CD4-positive, alpha-beta T cell (primary cell): ENCODE measurements at regions of chr19 and their contacts with region 1.

Region 1: DNA sequence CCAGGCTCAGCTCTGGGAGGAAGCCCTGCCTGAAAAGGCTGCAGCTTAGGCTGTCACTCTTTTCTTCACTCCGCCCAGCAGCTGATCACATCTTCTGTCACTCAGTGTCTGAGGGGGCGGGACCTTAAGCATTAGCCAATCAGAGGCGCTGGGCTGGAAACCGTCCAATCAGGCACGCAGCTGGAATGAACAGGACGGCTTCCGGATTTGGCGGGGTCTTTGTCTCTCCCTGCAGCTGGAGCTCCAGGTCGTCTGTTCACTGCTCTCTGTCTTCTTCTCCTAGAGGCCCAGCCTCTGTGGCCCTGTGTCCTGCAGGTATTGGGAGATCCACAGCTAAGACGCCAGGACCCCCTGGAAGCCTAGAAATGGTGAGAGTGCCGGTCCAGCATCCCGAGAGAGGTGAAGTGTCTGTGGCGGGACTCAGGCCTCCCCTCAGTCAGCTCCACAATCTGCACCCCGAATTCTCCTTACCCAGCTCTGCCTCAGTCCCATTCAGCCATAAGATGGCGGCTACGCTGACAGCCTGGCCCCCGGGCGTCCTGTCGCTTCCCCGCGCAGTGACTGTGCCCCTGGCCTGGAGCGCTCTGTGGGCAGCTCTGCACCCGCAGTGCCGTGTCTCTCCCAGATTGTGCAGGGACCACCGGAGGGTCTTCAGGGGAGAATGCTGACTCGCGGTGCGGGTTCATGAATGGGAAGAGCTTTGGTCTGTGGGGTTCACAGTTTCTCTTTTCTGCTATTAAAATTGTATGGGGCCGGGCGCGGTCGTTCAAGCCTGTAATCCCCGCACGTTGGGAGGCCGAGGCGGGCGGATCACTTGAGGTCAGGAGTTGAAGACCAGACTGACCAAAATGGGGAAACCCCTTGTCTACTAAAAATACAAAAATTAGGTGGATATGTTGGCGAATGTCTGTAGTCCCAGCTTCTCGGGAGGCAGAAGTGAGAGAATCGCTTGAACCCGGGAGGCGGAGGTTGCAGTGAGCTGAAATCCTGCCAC is at the start of gene ZNF66:
- DNase-seq: peak; percentile 90 to 98 (median 93)
- ATAC-seq: peak; percentile 97
- H3K4me3 ChIP-seq: peak within 1 kb of the TSS; percentile 85
- H3K4me3 Mint-ChIP-seq: peak within 1 kb of the TSS; percentile 97
- H3K27ac ChIP-seq: peak within 1 kb of the TSS; percentile 70 to 74
- H3K27ac Mint-ChIP-seq: peak within 1 kb of the TSS; percentile 91
- H3K4me1 ChIP-seq: peaks cover 6% of the 10 kb centered on the region
- H3K4me1 Mint-ChIP-seq: peaks cover 31% of the 10 kb centered on the region
- H3K27me3 ChIP-seq: no peaks in the 10 kb centered on the region
- H3K27me3 Mint-ChIP-seq: no peaks in the 10 kb centered on the region
- CTCF ChIP-seq: no peak
- total RNA-seq, gene ZNF66: 6.4 to 7.4 TPM

Region 2: DNA sequence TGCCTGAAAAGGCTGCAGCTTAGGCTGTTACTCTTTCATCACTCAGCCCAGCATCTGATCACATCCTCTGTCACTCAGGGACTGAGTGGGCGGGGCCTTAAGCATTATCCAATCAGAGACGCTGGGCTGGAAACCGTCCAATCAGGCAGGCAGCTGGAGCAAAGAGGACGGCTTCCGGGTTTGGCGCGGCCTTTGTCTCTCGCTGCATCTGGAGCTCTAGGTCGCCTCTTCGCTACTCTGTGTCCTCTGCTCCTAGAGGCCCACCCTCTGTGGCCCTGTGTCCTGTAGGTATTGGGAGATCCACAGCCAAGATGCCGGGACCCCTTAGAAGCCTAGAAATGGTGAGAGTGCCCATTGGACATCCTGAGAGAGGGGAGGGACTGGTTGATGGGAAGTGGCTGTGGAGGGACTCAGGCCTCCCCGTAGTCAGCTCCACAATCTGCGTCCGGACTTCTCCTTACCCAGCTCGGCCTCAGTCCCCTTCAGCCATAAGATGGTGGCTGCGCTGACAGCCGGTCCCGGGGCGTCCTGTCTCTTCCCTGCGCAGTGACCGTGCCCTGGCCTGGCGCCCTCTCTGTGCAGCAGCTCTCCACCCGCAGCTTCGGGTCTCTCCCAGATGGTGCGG is 609.2 kb before region 1 on chr19 and contains the start of gene ZNF486:
- CTCF ChIA-PET with region 1: no interaction called
- POLR2A ChIA-PET with region 1: interaction called, 6 read pairs
- intact Hi-C with region 1: loop called in 1 of 2 experiments (anchors 10 kb)
- DNase-seq: peak; percentile 83 to 97 (median 88)
- ATAC-seq: peak; percentile 97
- H3K4me3 ChIP-seq: peak within 1 kb of the TSS; percentile 67
- H3K4me3 Mint-ChIP-seq: peak within 1 kb of the TSS; percentile 98
- H3K27ac ChIP-seq: no peak within 1 kb of the TSS
- H3K27ac Mint-ChIP-seq: peak within 1 kb of the TSS; percentile 87
- H3K4me1 ChIP-seq: peaks cover 13% of the 10 kb centered on the region
- H3K4me1 Mint-ChIP-seq: peaks cover 63% of the 10 kb centered on the region
- H3K27me3 ChIP-seq: no peaks in the 10 kb centered on the region
- H3K27me3 Mint-ChIP-seq: no peaks in the 10 kb centered on the region
- CTCF ChIP-seq: no peak
- total RNA-seq, gene ZNF486: 3.0 to 3.8 TPM

Region 3: DNA sequence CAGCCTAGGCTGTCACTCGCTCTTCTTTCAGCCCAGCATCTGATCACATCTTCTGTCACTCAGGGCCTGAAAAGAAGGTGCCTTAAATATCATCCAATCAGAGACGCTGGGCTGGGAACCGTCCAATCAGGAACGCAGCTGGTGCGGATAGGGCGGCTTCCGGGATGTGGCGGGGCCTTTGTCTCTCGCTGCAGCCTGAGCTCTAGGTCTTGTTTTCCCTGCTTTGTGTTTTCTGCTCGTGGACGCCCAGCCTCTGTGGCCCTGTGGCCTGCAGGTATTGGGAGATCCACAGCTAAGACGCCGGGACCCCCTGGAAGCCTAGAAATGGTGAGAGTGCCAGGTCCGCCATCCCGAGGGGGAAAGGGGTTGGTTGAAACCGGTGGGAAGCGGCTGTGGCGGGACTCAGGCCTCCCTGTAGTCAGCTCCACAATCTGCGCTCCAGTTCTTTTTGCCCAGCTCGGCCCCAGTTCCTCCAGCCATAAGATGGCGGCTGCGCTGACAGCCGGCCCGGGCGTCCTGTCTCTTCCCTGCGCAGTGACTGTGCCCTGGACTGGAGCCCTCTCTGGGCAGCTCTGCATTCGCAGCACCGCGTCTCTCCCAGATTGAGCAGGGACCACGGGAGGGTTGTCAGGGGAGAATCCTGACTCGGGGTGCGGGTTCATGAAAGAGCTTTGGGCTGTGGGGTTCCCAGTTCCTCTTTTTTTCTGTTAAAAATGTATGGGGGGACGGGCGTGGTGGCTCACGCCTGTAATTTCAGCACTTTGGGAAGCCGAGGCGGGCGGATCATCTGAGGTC is 146.9 kb after region 1 on chr19 and contains the start of gene ZNF85:
- CTCF ChIA-PET with region 1: no interaction called
- POLR2A ChIA-PET with region 1: interaction called, 35 read pairs
- intact Hi-C with region 1: loop called in 1 of 2 experiments (anchors 5 kb)
- DNase-seq: peak; percentile 79 to 97 (median 86)
- ATAC-seq: peak; percentile 99
- H3K4me3 ChIP-seq: peak within 1 kb of the TSS; percentile 83
- H3K4me3 Mint-ChIP-seq: peak within 1 kb of the TSS; percentile 96
- H3K27ac ChIP-seq: peak within 1 kb of the TSS; percentile 44 to 75
- H3K27ac Mint-ChIP-seq: peak within 1 kb of the TSS; percentile 89
- H3K4me1 ChIP-seq: peaks cover 12% of the 10 kb centered on the region
- H3K4me1 Mint-ChIP-seq: peaks cover 26% of the 10 kb centered on the region
- H3K27me3 ChIP-seq: no peaks in the 10 kb centered on the region
- H3K27me3 Mint-ChIP-seq: no peaks in the 10 kb centered on the region
- CTCF ChIP-seq: no peak
- total RNA-seq, gene ZNF85: 3.4 to 4.7 TPM

Region 4: GRCh38 chr19:21141787-21142464 is 365.5 kb after region 1 on chr19 and contains the start of gene ZNF431:
- CTCF ChIA-PET with region 1: interaction called, 5 read pairs
- POLR2A ChIA-PET with region 1: interaction called, 11 read pairs
- intact Hi-C with region 1: loop called in 1 of 2 experiments (anchors 10 kb)
- DNase-seq: peak; percentile 79 to 96 (median 84)
- ATAC-seq: peak; percentile 99
- H3K4me3 ChIP-seq: peak within 1 kb of the TSS; percentile 67
- H3K4me3 Mint-ChIP-seq: peak within 1 kb of the TSS; percentile 95
- H3K27ac ChIP-seq: peak within 1 kb of the TSS; percentile 25 to 37
- H3K27ac Mint-ChIP-seq: peak within 1 kb of the TSS; percentile 91
- H3K4me1 ChIP-seq: peaks cover 8% of the 10 kb centered on the region
- H3K4me1 Mint-ChIP-seq: peaks cover 45% of the 10 kb centered on the region
- H3K27me3 ChIP-seq: no peaks in the 10 kb centered on the region
- H3K27me3 Mint-ChIP-seq: no peaks in the 10 kb centered on the region
- CTCF ChIP-seq: no peak
- total RNA-seq, gene ZNF431: 24.6 to 25.9 TPM